Activated CD4-positive, alpha-beta memory T cell treated with anti-CD3 and anti-CD28 coated beads for 36 hours (primary cell): ENCODE measurements at regions of chr11 and their contacts with region 1.

Region 1: GRCh38 chr11:3947061-3947460 is 91.6 kb downstream of the STIM1 start:
- DNase-seq: peak; percentile 69
- H3K4me3 Mint-ChIP-seq: peak overlapping the region; percentile 40
- H3K27ac Mint-ChIP-seq: peak overlapping the region; percentile 93
- H3K4me1 Mint-ChIP-seq: peaks cover 94% of the 10 kb centered on the region
- H3K27me3 Mint-ChIP-seq: no peaks in the 10 kb centered on the region

Region 2: GRCh38 chr11:3834664-3835461 is 112.2 kb before region 1 on chr11:
- CTCF ChIA-PET with region 1: no interaction called
- POLR2A ChIA-PET with region 1: no interaction called
- intact Hi-C with region 1: no loop called
- DNase-seq: no peak
- H3K4me3 Mint-ChIP-seq: peak overlapping the region; percentile 64
- H3K27ac Mint-ChIP-seq: peak overlapping the region; percentile 92
- H3K4me1 Mint-ChIP-seq: peaks cover 79% of the 10 kb centered on the region
- H3K27me3 Mint-ChIP-seq: no peaks in the 10 kb centered on the region

Region 3: GRCh38 chr11:3920148-3920852 is 26.8 kb before region 1 on chr11:
- CTCF ChIA-PET with region 1: no interaction called
- POLR2A ChIA-PET with region 1: no interaction called
- intact Hi-C with region 1: loop called (anchors 1 kb)
- DNase-seq: peak; percentile 87
- H3K4me3 Mint-ChIP-seq: no peak overlapping the region
- H3K27ac Mint-ChIP-seq: peak overlapping the region; percentile 77
- H3K4me1 Mint-ChIP-seq: peaks cover 61% of the 10 kb centered on the region
- H3K27me3 Mint-ChIP-seq: no peaks in the 10 kb centered on the region

Region 4: GRCh38 chr11:3959015-3959919 is 12.2 kb after region 1 on chr11:
- CTCF ChIA-PET with region 1: interaction called, 3 read pairs
- POLR2A ChIA-PET with region 1: no interaction called
- intact Hi-C with region 1: loop called (anchors 1 kb)
- DNase-seq: no peak
- H3K4me3 Mint-ChIP-seq: no peak overlapping the region
- H3K27ac Mint-ChIP-seq: peak overlapping the region; percentile 11
- H3K4me1 Mint-ChIP-seq: peaks cover 76% of the 10 kb centered on the region
- H3K27me3 Mint-ChIP-seq: no peaks in the 10 kb centered on the region

Region 5: DNA sequence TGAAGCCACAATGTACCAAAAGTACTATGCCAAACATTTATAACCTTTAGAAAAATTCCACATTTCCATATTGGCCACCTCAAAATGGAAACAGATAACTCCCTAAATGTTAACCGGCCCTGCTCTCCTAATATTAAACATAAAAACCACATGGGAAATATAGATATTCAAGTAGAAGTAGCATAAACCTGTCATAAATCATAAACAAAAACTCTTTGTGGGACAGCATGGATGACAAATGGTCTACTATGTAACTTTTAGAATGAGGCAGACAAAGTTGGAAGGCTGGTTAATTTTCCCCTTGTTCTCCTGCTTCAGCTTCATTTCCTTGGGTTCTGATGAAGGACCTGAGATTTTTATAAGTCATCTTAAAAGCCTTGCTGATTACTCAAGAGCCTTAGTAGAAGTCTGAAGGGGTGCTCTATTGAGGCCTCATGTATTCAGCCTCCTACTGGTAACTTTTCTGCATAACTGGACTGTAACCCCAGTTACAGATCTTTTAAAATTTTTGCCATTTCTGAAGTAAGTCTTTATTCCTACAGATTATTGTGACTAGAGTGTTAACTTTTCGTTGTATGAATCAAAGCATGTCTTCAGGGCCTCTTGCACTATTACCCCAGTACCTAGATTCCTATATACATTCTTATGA is 24.8 kb after region 1 on chr11:
- CTCF ChIA-PET with region 1: no interaction called
- POLR2A ChIA-PET with region 1: interaction called, 3 read pairs
- intact Hi-C with region 1: loop called (anchors 1 kb)
- DNase-seq: no peak
- H3K4me3 Mint-ChIP-seq: no peak overlapping the region
- H3K27ac Mint-ChIP-seq: peak overlapping the region; percentile 44
- H3K4me1 Mint-ChIP-seq: peaks cover 61% of the 10 kb centered on the region
- H3K27me3 Mint-ChIP-seq: no peaks in the 10 kb centered on the region

Region 6: DNA sequence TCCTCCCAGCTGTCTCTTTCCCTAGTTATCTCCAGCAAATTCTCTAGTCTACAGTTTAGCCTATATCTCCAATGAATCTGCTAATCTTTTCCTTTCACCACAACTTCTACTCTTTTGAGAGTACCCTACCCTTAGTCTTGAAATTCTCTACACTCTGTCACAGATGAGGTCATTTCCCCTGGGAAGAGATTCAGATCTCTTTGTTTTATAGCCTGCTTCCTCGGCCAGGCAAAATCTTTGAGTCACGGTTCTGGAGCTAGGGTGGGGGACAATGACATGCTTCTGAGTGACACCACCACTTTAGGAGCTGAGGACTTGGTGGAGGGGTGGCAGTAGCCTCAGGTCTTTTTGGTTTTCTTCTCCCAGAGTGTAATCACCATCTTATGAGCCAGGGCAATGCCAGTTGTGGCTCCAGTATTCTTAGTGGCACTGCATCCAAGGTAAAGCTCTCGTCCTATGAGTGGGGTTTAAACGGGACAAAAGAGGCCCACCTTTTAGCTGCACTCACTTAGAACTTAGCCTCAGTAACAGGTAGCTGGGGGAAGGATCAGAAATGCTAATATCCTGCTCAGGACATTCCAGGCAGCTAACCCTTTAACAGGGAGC is 49.0 kb after region 1 on chr11:
- CTCF ChIA-PET with region 1: no interaction called
- POLR2A ChIA-PET with region 1: no interaction called
- intact Hi-C with region 1: loop called (anchors 5 kb)
- DNase-seq: no peak
- H3K4me3 Mint-ChIP-seq: no peak overlapping the region
- H3K27ac Mint-ChIP-seq: no peak overlapping the region
- H3K4me1 Mint-ChIP-seq: peaks cover 33% of the 10 kb centered on the region
- H3K27me3 Mint-ChIP-seq: no peaks in the 10 kb centered on the region

Region 7: DNA sequence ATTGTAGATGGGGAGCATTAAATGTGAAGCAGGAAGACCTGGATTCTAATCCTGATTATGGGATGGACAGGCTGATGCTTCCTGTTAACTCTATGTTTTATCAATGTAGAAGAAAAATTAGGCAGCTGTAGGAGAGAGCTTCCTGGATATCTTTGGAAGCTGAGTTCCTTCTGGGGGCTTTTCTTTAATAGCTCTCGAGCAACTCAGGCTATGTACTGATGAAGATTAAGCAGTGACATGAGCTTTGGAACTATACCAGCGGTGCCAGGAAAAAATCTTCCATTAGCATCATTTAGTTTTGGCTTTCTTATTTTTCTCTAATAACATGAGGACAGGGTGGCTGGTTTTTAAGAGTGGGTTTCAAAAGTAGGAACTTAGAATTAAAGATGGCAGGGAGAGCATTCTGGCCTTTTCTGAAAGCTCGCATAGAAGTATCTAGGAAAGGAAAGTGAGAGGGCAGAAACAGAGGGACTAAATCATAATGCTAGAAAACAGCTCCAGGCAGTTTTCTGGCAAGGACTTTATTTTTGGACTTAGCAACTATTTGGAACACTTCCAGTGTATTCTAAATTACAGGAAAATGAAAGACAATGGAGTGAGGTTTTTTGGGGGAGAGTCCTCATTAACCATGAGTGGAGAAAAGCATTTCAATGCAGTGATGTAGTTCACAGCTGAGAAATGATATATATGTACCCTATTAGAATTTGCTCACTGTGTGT is 78.3 kb after region 1 on chr11:
- CTCF ChIA-PET with region 1: no interaction called
- POLR2A ChIA-PET with region 1: no interaction called
- intact Hi-C with region 1: no loop called
- DNase-seq: no peak
- H3K4me3 Mint-ChIP-seq: no peak overlapping the region
- H3K27ac Mint-ChIP-seq: no peak overlapping the region
- H3K4me1 Mint-ChIP-seq: peaks cover 6% of the 10 kb centered on the region
- H3K27me3 Mint-ChIP-seq: no peaks in the 10 kb centered on the region

Region 8: DNA sequence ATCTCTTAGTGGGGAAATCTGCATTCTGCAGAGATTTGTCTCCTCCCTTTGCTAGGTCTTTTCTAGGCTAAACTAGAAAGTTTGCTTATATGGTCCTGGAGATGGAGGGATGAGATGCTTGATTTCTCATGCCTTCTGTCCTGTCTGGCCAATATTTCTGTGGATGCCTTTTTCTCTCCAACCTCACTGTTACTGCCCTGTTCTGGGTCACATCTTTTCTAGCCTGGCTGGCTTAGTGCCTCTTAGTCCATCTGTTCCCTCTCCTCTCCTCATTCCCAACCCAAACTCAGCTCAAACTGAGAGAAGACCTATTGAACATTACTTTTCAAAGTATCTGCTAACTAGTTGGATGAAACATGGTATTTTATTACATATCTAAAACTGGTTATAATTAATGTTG is 209.5 kb after region 1 on chr11:
- CTCF ChIA-PET with region 1: no interaction called
- POLR2A ChIA-PET with region 1: no interaction called
- intact Hi-C with region 1: no loop called
- DNase-seq: no peak
- H3K4me3 Mint-ChIP-seq: no peak overlapping the region
- H3K27ac Mint-ChIP-seq: no peak overlapping the region
- H3K4me1 Mint-ChIP-seq: no peaks in the 10 kb centered on the region
- H3K27me3 Mint-ChIP-seq: no peaks in the 10 kb centered on the region

Region 9: GRCh38 chr11:4569075-4569474 is 622.0 kb after region 1 on chr11:
- CTCF ChIA-PET with region 1: no interaction called
- POLR2A ChIA-PET with region 1: no interaction called
- intact Hi-C with region 1: no loop called
- DNase-seq: no peak
- H3K4me3 Mint-ChIP-seq: no peak overlapping the region
- H3K27ac Mint-ChIP-seq: no peak overlapping the region
- H3K4me1 Mint-ChIP-seq: no peaks in the 10 kb centered on the region
- H3K27me3 Mint-ChIP-seq: peaks cover 2% of the 10 kb centered on the region